Panc1 (cell line): ENCODE measurements at regions of chr12 and their contacts with region 1.

Region 1: GRCh38 chr12:85468356-85469157 is 188.5 kb downstream of the ALX1 start:
- DNase-seq: peak; percentile 22
- ATAC-seq: no peak
- H3K4me3 ChIP-seq: peak overlapping the region in 1 of 2 experiments; percentile 5; a peak in 1 of 4 replicates
- H3K27ac ChIP-seq: no peak overlapping the region
- H3K4me1 ChIP-seq: no peaks in the 10 kb centered on the region
- H3K27me3 ChIP-seq: no peaks in the 10 kb centered on the region
- CTCF ChIP-seq: peak; percentile 80

Region 2: GRCh38 chr12:85394834-85395233 is 73.7 kb before region 1 on chr12:
- CTCF ChIA-PET with region 1: no interaction called
- POLR2A ChIA-PET with region 1: no interaction called
- in situ Hi-C with region 1: no loop called
- intact Hi-C with region 1: no loop called
- DNase-seq: no peak
- ATAC-seq: no peak
- H3K4me3 ChIP-seq: no peak overlapping the region
- H3K27ac ChIP-seq: no peak overlapping the region
- H3K4me1 ChIP-seq: no peaks in the 10 kb centered on the region
- H3K27me3 ChIP-seq: no peaks in the 10 kb centered on the region
- CTCF ChIP-seq: no peak

Region 3: GRCh38 chr12:85872497-85873091 is 404.0 kb after region 1 on chr12:
- CTCF ChIA-PET with region 1: no interaction called
- POLR2A ChIA-PET with region 1: interaction called, 3 read pairs
- in situ Hi-C with region 1: no loop called
- intact Hi-C with region 1: loop called (anchors 2 kb)
- DNase-seq: peak; percentile 28
- ATAC-seq: no peak
- H3K4me3 ChIP-seq: no peak overlapping the region
- H3K27ac ChIP-seq: no peak overlapping the region
- H3K4me1 ChIP-seq: no peaks in the 10 kb centered on the region
- H3K27me3 ChIP-seq: no peaks in the 10 kb centered on the region
- CTCF ChIP-seq: peak; percentile 75; the same call in 1 of the 2 replicates

Region 4: GRCh38 chr12:86193931-86194330 is 725.4 kb after region 1 on chr12:
- CTCF ChIA-PET with region 1: no interaction called
- POLR2A ChIA-PET with region 1: no interaction called
- in situ Hi-C with region 1: no loop called
- intact Hi-C with region 1: no loop called
- DNase-seq: no peak
- ATAC-seq: no peak
- H3K4me3 ChIP-seq: no peak overlapping the region
- H3K27ac ChIP-seq: no peak overlapping the region
- H3K4me1 ChIP-seq: no peaks in the 10 kb centered on the region
- H3K27me3 ChIP-seq: no peaks in the 10 kb centered on the region
- CTCF ChIP-seq: no peak